PC-3 (cell line): ENCODE measurements at regions of chr12 and their contacts with region 1.

Region 1: DNA sequence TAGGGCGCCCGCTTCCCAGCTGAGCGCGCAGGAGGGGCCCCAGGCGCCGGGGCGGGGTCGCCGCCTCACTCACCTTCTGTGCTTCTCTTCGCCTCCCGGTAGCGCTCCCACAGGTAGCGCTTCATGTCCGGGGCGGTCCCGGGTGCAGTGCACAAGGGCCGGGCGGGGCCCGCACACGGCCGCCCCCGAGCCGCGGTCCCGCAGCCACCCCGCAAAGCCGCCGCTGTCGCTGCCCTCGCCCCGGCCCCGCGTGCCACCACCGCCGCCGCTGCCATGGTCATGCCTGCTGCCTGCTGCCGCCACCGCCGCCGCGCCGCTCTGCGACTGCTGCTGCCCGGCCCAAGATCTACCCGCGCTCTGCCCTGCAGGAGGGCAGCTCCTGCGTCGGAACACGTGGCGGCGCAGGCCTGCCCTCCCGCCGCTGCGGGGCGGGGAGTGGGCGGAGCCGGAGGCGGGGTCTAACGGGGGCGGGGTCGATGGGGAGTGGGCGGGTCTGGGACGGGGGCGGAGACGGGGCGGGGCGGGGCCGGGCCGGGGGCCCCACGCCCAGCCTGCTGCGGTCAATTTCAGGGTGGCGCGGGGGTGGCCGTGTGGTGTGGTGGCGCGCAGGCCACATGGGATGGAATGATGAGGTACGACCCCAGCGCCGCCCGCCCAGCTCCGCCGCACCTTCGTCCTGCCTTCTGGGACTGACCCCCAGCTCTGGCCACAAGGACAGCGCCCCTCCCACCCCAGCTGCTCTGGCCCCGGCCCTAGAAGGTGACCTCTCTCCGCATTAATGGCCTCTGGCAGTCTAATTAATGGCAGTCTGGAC is at the start of gene NT5DC3:
- DNase-seq: peak; percentile 89
- ATAC-seq: peak; percentile 69
- H3K4me3 ChIP-seq: peak within 1 kb of the TSS; percentile 93
- H3K27ac ChIP-seq: peak within 1 kb of the TSS; percentile 92
- H3K4me1 ChIP-seq: peaks cover 31% of the 10 kb centered on the region
- H3K27me3 ChIP-seq: no peaks in the 10 kb centered on the region
- CTCF ChIP-seq: no peak
- total RNA-seq, gene NT5DC3: 14.9 and 15.7 TPM in 2 replicates

Region 2: GRCh38 chr12:103851127-103851526 is 10.0 kb after region 1 on chr12:
- CTCF ChIA-PET with region 1: no interaction called
- POLR2A ChIA-PET with region 1: interaction called, 9 read pairs
- intact Hi-C with region 1: loop called (anchors 1 kb)
- DNase-seq: peak; percentile 64
- ATAC-seq: peak; percentile 52
- H3K4me3 ChIP-seq: no peak overlapping the region
- H3K27ac ChIP-seq: peak overlapping the region; percentile 9
- H3K4me1 ChIP-seq: peaks cover 41% of the 10 kb centered on the region
- H3K27me3 ChIP-seq: no peaks in the 10 kb centered on the region
- CTCF ChIP-seq: no peak

Region 3: DNA sequence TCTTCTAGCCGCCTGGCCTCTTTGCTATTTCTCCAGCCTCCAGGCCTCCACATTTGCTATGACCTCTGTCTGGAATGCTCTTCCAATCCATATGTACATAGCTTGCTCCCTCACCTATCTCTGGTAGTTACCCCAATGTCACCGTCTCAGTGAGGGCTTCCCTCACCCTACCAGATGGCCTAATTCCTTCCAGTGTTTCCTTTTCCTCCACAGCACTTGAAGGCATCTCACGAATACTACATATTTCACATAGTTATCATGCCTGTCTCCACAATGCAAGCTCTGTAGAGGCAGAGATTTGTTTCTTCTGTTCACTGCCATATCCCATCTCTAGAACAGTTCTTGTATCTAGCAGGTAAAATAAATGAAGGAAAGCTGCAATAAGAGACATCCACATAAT is 67.8 kb after region 1 on chr12:
- CTCF ChIA-PET with region 1: no interaction called
- POLR2A ChIA-PET with region 1: no interaction called
- intact Hi-C with region 1: no loop called
- DNase-seq: no peak
- ATAC-seq: no peak
- H3K4me3 ChIP-seq: no peak overlapping the region
- H3K27ac ChIP-seq: no peak overlapping the region
- H3K4me1 ChIP-seq: no peaks in the 10 kb centered on the region
- H3K27me3 ChIP-seq: no peaks in the 10 kb centered on the region
- CTCF ChIP-seq: no peak

Region 4: DNA sequence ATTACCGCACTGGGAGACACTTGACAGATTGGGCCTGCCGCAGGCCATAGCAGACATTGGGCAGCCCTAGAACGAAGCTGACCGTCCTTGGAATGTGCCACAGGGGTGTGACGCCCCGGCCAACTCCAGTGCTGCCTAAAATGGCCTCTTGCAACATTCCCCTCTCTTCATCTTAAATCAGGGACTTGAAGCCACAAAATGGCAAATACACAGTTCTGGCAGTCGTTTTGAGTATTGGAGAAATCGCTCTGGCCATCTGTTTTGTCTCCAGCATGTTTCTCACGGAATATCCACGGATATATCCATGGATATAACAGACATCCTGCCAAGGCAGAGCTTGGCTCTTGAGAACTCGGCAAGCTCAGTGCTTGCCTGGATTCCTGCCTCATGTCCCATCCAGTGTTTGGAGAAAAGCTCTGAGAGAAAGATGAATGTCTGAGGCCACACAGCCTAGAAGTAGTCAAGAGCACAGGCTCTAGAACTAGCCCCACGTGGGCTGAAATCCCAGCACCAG is 774.0 kb after region 1 on chr12:
- CTCF ChIA-PET with region 1: no interaction called
- POLR2A ChIA-PET with region 1: no interaction called
- intact Hi-C with region 1: no loop called
- DNase-seq: no peak
- ATAC-seq: no peak
- H3K4me3 ChIP-seq: no peak overlapping the region
- H3K27ac ChIP-seq: no peak overlapping the region
- H3K4me1 ChIP-seq: no peaks in the 10 kb centered on the region
- H3K27me3 ChIP-seq: no peaks in the 10 kb centered on the region
- CTCF ChIP-seq: no peak